ENCODE measurements at regions of chrX and their contacts with region 1.

Region 1: DNA sequence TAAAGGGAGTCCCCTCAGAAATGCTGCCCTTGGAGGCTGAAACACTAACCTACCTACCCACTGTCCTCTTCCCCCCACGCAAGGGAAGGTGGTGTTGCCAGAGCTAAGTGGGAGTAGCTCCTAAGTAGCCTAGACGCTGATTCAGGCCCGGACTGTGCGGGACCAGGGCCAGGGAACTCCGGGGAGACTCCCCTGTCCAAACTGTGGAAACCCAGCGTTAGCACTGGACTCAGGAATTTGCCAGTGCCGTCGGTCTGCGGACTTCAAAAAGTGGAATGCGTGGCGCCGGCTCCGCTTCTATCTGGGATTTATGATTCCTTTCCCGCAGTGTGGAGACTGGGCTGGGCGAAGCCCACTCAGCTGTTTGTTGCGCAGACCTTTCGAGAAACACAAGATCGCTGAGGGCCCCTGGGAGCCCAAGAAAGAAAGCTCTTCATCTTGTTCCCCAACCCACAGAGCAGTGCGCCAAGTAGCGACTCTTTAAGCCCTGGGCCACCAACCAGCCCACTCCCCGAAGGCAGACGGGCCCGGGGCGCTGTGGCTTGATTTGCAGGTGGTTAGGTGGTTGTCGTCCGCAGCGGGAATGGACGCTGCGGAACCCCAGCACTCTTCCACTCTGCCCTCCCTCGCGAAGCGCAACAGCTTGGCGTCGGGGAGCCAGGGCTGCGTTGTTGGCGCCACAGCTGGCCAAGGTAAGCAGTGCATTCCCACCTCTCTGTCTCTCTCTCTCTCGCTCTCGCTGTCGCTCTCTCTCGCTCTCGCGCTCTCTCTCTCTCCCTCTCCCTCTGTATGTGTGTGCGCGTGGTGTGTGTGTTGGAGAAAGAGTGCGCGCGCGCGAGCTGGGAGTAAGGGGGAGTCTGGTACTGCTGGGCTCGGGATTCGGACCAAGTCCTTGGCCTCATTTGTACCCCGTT is 2.0 kb downstream of the TMEM255A start:
- DNase-seq: no peak
- ATAC-seq: peak; percentile 95
- H3K4me3 ChIP-seq: peak overlapping the region; percentile 27 to 45
- H3K27ac ChIP-seq: no peak overlapping the region
- H3K4me1 ChIP-seq: peaks cover 13% of the 10 kb centered on the region
- H3K27me3 ChIP-seq: peaks cover 31% of the 10 kb centered on the region
- CTCF ChIP-seq: peak; percentile 80

Region 2: GRCh38 chrX:120457766-120458180 is 148.6 kb after region 1 on chrX:
- CTCF ChIA-PET with region 1: interaction called, 3 read pairs
- POLR2A ChIA-PET with region 1: no interaction called
- in situ Hi-C with region 1: no loop called
- intact Hi-C with region 1: loop called (anchors 10 kb)
- DNase-seq: peak; percentile 5
- ATAC-seq: peak; percentile 75
- H3K4me3 ChIP-seq: no peak overlapping the region
- H3K27ac ChIP-seq: no peak overlapping the region
- H3K4me1 ChIP-seq: peaks cover 12% of the 10 kb centered on the region; the same call in 1 of the 2 replicates
- H3K27me3 ChIP-seq: no peaks in the 10 kb centered on the region
- CTCF ChIP-seq: no peak